CD8-positive, alpha-beta T cell (primary cell): ENCODE measurements at regions of chr3 and their contacts with region 1.

Region 1: GRCh38 chr3:188584162-188584529 is 430.2 kb downstream of the LPP start:
- DNase-seq: peak in 1 of 9 experiments; percentile 12
- ATAC-seq: no peak
- H3K4me3 ChIP-seq: no peak overlapping the region
- H3K4me3 Mint-ChIP-seq: no peak overlapping the region
- H3K27ac ChIP-seq: no peak overlapping the region
- H3K27ac Mint-ChIP-seq: no peak overlapping the region
- H3K4me1 ChIP-seq: no peaks in the 10 kb centered on the region
- H3K4me1 Mint-ChIP-seq: peaks cover 2% of the 10 kb centered on the region
- H3K27me3 ChIP-seq: no peaks in the 10 kb centered on the region
- H3K27me3 Mint-ChIP-seq: no peaks in the 10 kb centered on the region
- CTCF ChIP-seq: no peak

Region 2: GRCh38 chr3:188476935-188477334 is 107.2 kb before region 1 on chr3:
- CTCF ChIA-PET with region 1: no interaction called
- POLR2A ChIA-PET with region 1: no interaction called
- intact Hi-C with region 1: no loop called
- DNase-seq: no peak
- ATAC-seq: no peak
- H3K4me3 ChIP-seq: no peak overlapping the region
- H3K4me3 Mint-ChIP-seq: no peak overlapping the region
- H3K27ac ChIP-seq: no peak overlapping the region
- H3K27ac Mint-ChIP-seq: no peak overlapping the region
- H3K4me1 ChIP-seq: no peaks in the 10 kb centered on the region
- H3K4me1 Mint-ChIP-seq: peaks cover 4% of the 10 kb centered on the region
- H3K27me3 ChIP-seq: no peaks in the 10 kb centered on the region
- H3K27me3 Mint-ChIP-seq: no peaks in the 10 kb centered on the region
- CTCF ChIP-seq: no peak

Region 3: DNA sequence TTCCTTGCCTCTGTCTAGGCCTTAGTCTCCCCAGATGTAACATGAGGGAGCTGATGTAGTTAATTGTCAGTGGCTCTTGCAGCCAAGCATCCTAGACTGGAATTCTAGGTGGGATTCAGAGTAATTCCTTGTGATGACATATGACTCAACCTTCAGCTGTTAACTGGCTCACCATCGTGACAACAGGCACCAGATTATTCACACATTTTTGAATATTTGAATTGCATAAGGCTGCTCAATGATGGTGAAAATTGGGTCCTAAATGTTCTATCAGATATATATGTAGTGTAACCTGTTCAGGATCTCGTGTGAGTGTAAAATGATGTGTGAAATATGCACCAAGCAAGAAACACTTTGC is 25.1 kb before region 1 on chr3:
- CTCF ChIA-PET with region 1: no interaction called
- POLR2A ChIA-PET with region 1: no interaction called
- intact Hi-C with region 1: no loop called
- DNase-seq: no peak
- ATAC-seq: no peak
- H3K4me3 ChIP-seq: no peak overlapping the region
- H3K4me3 Mint-ChIP-seq: no peak overlapping the region
- H3K27ac ChIP-seq: no peak overlapping the region
- H3K27ac Mint-ChIP-seq: no peak overlapping the region
- H3K4me1 ChIP-seq: no peaks in the 10 kb centered on the region
- H3K4me1 Mint-ChIP-seq: peaks cover 12% of the 10 kb centered on the region
- H3K27me3 ChIP-seq: no peaks in the 10 kb centered on the region
- H3K27me3 Mint-ChIP-seq: no peaks in the 10 kb centered on the region
- CTCF ChIP-seq: no peak

Region 4: DNA sequence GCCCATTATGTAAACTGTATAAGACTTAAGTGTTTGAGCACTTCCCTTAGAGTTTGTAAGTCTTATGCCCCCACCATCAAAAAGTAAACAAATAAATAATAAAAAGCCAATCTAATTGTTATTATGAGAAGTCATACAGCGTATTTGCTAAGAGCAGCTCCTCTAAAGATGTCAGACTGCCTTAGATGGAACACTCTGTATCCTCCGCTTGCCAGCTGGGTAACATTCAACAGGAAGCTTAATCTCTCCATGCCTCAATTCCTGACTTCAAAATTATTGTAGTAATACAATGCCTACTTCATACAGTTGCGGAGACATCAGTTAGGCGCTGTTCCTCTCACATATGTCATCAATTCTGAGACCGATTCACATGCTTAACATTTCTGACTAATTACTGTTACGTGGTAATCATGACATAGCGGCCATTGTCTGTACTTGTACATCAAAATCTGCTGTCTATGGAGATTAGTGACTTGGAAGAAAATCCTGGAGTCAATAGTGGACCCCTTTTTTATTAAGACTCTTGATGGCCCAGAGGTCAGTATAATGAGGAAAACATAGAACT is 12.5 kb before region 1 on chr3:
- CTCF ChIA-PET with region 1: no interaction called
- POLR2A ChIA-PET with region 1: no interaction called
- intact Hi-C with region 1: loop called in 1 of 2 experiments (anchors 2 kb)
- DNase-seq: no peak
- ATAC-seq: no peak
- H3K4me3 ChIP-seq: no peak overlapping the region
- H3K4me3 Mint-ChIP-seq: no peak overlapping the region
- H3K27ac ChIP-seq: no peak overlapping the region
- H3K27ac Mint-ChIP-seq: no peak overlapping the region
- H3K4me1 ChIP-seq: no peaks in the 10 kb centered on the region
- H3K4me1 Mint-ChIP-seq: peaks cover 6% of the 10 kb centered on the region
- H3K27me3 ChIP-seq: no peaks in the 10 kb centered on the region
- H3K27me3 Mint-ChIP-seq: no peaks in the 10 kb centered on the region
- CTCF ChIP-seq: no peak